Right ventricle myocardium inferior (tissue), 1 donor: ENCODE measurements at regions of chr10 and their contacts with region 1.

Region 1: DNA sequence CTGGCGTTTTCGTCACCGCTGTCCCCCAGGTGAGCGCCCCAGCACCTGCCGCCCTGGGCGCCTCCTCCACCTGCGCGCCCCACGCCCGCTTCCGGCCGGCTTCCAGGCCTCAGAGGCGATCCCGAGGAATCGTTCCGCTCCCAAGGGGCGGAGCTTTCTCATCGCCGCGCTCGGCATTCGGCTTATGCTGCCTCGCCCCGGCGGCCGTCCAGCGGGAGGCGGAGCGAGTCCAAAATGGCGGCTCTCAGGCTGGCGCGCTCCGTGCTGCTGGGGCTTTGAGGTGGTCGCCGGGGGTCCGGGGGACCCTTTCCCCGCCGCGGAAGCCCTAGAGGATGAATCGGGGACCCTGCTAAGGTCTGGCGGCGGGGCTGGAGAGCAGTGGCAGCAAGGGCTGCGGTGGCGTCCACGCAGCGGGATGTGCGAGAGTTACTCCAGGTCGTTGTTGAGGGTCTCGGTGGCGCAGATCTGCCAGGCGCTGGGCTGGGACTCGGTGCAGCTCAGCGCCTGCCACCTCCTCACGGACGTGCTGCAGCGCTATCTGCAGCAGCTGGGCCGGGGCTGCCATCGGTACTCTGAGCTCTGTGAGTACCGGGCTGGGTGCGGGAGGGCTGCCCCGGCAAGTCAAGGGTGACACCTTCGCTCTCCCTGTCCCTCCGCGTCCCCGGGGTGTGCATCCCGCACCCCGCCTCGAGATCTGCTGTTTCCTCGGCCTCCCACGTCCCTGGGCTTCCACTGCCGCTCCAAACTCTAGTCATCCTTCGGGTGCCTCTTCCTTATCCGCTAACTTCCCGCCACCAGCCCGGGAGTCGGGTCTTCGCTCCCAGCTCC is at the start of gene TAF3:
- DNase-seq: peak; percentile 97
- ATAC-seq: peak; percentile 93
- total RNA-seq, gene TAF3: 11.8 TPM

Region 2: DNA sequence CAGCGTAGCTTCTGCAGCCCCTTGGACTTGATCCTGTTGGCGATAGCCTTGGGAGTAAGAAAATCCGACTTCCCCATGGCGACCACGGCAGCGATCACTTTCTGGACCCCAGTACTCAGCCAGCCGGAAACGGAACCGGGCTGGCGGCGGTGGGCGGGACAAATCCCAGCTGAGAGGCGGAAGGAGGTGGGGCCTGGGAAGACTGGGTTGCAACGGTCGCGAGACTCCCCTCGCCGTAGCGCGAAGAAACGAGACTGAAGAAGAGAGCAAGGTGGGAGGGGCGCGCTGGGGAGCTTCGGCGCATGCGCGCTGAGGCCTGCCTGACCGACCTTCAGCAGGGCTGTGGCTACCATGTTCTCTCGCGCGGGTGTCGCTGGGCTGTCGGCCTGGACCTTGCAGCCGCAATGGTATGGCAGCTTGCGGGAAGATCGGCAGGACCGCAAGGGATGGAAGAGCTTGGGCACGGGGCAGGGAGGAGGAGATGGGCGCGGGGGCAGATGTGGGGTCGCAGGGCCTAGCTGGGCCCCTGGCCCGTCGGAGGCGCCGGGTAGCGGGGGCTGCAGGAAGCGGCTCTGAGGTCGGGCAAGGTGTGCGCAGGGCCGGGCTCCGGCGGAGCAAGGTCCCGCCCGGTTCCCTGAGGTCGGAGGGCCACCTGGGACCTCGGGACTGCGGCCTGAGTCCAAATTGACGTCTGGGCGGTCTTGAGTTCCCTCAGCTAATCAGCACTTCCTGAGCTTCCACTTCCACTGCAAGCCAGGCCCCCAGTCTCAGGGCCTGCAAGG is 30.5 kb before region 1 on chr10 and contains the starts of genes ATP5F1C and KIN:
- intact Hi-C with region 1: loop called (anchors 2 kb)
- DNase-seq: peak; percentile 99
- ATAC-seq: peak; percentile 97
- total RNA-seq, gene ATP5F1C: 804 TPM
- total RNA-seq, gene KIN: 7.5 TPM